GM10248 (cell line): ENCODE measurements at regions of chr10 and their contacts with region 1.

Region 1: DNA sequence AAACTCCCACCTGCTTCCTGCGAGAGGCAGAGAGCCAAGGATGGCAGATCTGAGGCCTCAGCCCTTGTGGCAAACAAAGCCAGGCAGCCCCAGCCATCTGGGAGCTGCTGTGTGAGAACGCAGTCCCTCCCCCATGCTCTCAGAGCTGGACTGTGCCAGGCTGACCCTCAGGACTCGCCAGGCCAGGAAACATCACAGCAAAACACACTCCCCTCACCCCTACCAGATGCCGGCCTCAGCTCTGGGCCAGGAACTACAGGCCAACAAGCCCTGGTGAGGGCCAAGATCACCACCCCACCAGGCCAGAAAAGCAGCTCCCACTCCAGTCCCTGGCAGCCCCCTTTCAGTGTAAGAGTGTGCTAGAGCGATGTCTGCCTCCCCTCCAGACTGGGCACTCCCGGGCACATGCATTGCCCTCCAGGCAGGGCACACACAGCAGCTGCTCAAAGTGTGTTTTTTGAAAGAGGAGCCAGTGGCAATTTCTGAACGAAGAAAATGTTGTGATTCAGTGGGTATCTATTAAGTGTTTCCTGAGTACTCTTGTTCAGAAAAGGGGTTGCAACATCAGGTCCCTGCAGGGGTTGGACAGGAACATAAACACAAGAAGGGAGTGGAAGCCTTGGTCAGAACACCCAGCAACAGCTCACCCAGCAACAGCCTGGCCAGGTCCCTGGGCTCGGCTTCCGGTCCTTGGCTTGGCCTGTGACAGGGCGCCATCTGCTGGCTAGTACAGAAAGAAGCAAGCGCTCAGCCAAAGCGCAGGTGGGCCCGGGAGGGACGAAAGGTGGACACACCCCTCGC is 18.3 kb downstream of the LRRC20 start:
- DNase-seq: peak; percentile 88
- CTCF ChIP-seq: peak; percentile 95

Region 2: DNA sequence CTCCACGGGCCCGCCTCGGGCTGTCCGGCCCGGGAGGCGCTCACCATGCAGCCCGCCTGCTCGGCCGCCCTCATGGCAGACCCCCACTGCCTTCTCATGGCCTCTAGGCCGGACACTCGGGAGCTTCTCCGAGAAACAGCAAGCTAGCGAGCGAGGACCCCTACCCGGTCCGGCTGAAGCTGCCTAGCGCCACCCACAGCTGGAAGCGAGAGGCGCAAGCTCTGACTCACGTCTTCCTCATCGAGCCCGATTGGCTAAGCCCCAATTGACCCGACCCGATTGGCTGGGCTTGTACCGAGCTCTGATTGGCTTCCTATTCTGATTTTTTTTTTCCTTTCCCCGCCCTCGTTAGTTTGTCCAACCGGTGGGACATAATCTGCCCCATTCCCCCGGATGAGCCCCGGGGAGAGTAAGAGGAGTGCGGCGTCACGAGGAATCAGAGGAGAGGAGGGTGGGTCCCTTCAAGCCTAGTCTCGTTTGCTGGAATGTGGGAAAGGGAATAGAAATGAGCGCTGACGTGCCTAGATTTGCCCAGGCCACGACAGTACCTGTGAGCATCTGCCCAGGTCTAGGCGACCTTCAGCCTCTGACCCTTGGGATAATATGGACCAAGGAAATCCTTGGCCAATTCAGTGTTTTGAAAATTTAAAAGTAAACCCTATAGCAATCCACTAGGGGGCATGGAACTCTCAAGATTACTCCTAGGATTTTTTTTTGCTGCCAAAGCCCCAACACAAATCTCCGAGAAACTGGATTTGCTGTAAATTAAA is 217.5 kb before region 1 on chr10 and contains the start of gene TYSND1:
- CTCF ChIA-PET with region 1: interaction called, 22 read pairs
- POLR2A ChIA-PET with region 1: no interaction called
- DNase-seq: peak; percentile 97
- CTCF ChIP-seq: peak; percentile 85

Region 3: DNA sequence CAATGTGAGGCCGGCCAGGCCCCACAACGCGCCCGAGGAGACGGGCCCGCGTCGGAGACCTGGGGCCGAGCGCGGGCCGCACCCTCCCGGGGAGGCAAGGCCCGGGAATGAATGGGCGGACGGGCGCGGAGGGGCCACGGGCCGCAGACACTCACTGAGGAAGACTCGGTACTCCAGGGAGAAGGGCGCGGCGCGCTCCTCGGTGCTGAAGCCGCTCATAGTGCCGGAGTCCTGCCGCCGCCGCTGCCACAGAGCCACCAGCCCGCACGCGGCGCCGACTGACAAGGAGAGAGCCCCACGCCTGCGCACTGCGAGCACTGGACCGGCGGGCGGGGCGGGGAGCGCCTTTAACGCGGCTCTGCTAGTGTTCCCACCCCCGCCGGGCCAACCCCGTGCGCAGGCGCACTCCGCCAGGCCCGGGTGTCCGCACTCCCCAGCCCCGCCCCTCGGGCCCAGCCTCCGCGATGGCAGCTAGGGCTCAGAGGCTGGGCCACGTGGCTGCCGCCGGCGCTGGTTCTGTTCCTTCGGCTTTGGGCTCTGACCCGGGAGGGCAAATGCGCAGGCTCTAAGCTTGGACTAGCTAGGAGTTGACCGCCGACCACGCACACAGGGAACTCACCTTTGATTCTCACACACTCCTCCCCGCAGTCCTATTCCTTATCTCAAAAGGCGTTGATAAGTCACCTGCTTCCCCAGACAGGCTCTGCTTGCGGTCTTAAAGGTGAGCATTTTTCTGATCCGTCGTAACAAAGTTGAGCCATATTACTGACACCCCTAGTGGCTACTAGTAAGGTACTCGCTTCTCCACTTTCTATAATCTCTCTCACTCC is 130.8 kb before region 1 on chr10 and contains the start of gene PPA1:
- CTCF ChIA-PET with region 1: interaction called, 529 read pairs
- POLR2A ChIA-PET with region 1: no interaction called
- DNase-seq: peak; percentile 100
- CTCF ChIP-seq: no peak

Region 4: DNA sequence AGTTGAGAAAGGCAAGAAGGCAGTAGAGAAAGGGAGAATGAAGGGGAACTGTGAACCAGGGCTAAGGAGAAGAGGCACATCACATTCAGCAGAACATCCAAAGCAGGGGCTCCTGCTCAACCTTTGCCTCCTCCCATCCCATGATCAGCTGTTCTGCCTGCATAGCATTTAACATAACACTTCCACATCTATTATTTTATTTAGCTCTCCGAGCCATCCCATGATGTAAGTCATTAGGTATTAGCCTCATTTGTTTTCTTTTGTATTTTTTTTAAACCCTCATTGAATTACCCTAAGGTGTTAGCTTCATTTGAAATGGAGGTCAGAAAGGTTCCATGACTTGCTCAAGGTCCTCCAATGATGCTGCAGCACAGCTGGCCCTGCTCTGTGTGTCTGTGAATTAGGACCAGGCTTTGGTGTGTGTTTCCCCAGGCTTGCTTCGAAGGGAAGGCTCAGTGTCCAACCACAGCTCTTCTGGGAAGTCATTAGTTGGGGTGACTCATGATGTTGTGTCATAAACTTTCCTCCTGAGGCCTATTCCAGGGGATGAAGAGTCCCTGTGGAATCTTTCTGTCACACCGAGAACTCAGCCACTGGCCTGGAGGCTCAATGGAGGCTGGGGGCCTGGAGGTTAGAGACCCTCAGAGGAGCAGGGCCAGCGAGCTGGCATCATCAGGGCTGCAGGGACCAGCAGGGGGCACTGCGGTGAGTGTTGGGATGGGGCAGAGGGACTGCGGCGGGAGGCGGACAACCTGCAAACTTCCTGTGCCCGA is 96.8 kb before region 1 on chr10:
- CTCF ChIA-PET with region 1: interaction called, 24 read pairs
- POLR2A ChIA-PET with region 1: no interaction called
- DNase-seq: no peak
- CTCF ChIP-seq: no peak

Region 5: DNA sequence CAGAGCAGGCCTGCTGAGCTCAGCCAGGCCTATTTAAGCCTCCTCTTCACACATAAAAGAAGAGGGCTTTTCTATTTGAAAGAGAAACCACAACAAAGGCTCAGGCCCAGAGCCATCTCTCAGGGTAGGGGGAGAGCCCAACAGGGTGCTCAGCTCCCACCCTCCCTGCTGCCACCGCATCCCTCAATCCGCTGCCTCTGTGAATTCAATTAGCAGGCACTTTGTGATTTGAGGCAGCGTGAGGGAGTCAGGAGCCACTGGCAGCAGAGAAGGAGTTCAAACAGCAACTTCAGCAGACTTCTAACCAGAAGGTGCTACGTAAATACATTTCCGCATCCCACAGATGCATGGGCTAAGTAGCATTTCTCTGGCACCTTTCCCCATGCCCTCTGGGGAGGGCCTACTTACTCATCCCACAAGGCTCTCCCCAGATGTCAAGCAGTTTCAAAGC is 26.9 kb before region 1 on chr10:
- CTCF ChIA-PET with region 1: interaction called, 42 read pairs
- POLR2A ChIA-PET with region 1: no interaction called
- DNase-seq: no peak
- CTCF ChIP-seq: no peak

Region 6: DNA sequence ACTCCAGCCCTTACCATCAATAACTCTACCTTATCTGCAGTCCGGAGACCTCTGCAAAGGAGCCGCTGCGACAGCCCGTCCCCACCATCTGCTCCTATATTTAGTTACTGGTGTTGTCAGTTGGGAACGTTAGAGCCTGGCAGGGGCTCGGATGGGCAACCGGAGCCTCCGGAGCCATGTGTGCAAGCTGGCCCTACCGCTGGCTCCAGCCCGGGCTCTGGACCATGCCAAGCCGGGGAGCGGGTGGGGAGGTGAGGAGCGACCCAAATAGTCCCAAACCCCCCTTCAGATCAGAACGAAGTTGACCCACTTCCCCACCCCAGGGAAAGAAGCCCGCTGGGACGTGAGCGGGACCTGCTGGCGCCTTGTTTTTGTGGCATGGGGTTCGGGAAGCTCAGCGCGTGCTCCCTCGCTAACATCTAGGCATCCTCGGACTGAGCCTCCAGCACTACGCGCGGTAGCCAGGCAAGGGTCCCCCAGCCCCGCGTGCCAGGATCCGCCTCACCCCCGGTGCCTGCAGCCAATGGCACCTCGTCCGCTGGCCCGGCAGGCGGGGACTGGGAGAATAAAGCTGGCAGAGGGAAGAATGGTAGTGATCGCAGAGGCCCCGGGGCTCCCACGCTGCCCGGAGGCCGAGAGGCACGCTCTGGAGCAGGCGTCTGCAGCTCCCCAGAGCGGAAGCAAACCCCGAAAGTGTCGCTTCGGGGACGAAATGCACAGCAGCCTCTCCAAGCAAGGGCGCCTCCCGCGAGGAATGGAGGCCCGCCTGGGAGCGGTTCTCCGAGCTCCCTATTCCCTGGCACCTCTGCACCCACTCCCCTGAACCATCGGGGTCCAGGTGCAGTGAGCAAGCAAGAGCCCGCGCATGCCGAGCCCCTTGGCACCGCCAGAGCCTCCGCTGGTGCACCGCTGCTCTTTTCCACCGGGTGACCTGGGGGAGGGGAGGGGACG is 17.6 kb after region 1 on chr10:
- CTCF ChIA-PET with region 1: interaction called, 114 read pairs
- POLR2A ChIA-PET with region 1: no interaction called
- DNase-seq: peak; percentile 68
- CTCF ChIP-seq: peak; percentile 1

Region 7: DNA sequence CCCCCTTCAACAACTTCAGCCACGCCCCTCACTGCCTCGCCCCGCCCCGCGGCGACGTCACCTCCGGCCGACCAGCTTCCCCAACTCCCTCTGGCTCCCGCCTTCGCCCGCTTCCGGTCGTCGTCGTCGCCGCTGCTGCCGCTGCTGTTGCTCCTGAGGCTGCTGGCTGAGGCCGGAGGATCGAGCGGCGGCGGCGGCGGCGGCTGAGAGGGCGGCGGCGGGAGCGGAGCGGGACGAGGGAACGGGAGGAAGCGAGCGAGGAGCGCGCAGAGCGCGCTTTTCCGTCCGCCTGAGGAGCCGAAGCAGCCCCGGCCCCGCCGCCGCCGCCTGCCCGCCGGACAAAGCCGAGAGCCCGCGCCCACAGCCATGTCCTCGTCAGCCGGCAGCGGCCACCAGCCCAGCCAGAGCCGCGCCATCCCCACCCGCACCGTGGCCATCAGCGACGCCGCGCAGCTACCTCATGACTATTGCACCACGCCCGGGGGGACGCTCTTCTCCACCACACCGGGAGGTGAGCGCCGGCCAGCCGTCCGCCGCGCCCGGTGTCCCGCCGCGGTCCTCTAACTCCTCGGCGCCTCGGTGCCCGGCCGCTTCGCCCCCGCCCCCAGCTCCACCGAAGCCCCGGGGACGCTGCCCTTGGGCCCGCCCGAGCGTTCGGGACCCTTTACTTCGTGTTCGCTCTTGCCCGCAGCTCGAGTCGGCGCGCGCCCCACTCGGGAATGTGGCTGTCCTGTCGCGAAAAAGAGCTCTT is 40.0 kb after region 1 on chr10 and contains the start of gene EIF4EBP2:
- CTCF ChIA-PET with region 1: interaction called, 10 read pairs
- POLR2A ChIA-PET with region 1: no interaction called
- DNase-seq: peak; percentile 95
- CTCF ChIP-seq: no peak

Region 8: DNA sequence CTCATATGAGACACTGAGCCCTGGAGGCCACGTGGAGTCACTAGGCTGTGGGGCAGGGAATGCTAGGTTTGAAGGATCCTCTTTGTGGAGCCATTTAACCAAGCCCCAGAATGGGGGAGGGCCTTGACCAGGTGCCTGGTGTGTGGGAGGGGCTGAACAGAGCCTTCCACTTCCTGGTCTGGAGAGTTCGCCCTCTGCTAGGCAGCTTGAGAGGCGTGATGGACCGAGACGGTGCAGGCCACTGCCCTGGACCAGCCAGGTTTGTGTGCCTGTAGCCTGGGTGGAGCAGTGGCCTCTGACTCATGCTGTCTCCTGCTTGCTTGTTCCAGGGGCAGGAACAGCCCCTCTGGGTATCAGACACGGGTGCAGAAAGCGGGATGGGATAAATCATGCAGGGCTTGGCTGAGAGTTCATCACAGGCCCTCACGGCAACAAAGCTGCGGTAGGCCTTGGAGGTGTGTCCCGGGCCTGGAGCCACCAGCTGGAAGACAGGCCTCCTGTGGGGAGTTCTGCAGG is 335.5 kb after region 1 on chr10:
- CTCF ChIA-PET with region 1: no interaction called
- POLR2A ChIA-PET with region 1: no interaction called
- DNase-seq: no peak
- CTCF ChIP-seq: no peak